WTC11 (cell line): ENCODE measurements at regions of chr22 and their contacts with region 1.

Region 1: DNA sequence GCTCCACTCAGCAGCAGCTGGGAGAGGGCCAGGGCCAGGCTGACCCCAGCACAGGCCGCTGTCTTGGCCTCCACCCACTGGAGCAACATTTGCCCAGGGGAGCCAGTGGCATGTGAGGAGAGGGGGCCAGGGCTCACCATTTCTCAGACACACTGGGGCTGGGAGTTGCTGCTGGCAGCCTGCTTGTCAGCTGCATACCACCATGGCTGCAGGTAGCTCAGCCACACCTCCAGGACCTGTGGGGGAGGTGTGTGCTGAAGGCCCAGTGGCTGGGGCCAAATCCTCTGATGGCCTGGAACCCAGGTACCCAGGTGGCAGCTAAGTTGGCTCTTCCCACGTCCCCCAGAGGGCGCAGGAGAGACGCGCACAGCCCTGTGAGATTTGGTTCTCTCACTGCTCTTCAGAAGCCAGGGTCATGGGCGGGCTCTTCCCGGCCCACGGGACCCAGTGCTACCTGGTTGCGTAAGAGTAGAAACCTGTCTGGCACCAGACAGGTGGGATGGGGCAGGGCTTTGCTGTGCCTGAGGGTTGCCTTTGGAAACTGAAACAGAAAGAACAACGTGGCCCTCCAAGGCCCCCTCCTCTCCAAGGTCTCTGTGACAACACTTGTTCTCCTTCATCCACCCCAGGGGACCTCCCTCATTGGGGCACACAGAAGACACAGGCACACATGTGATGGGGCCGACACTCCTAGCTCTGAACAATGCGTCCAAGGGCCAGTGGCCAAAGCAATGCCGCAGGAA is 98.8 kb downstream of the MED15 start:
- DNase-seq: peak; percentile 88
- ATAC-seq: peak; percentile 93
- H3K4me3 Mint-ChIP-seq: no peak overlapping the region
- H3K27ac Mint-ChIP-seq: no peak overlapping the region
- H3K4me1 Mint-ChIP-seq: peaks cover 12% of the 10 kb centered on the region
- H3K27me3 Mint-ChIP-seq: no peaks in the 10 kb centered on the region
- CTCF ChIP-seq: peak; percentile 56; the same call in 1 of the 2 replicates

Region 2: GRCh38 chr22:20027966-20028854 is 578.0 kb before region 1 on chr22:
- CTCF ChIA-PET with region 1: no interaction called
- POLR2A ChIA-PET with region 1: no interaction called
- DNase-seq: no peak
- ATAC-seq: no peak
- H3K4me3 Mint-ChIP-seq: no peak overlapping the region
- H3K27ac Mint-ChIP-seq: no peak overlapping the region
- H3K4me1 Mint-ChIP-seq: 0 out of 2 replicates have a peak, but pooled peaks cover 4% of the 10 kb centered on the region
- H3K27me3 Mint-ChIP-seq: no peaks in the 10 kb centered on the region; the same call in 1 of the 2 replicates
- CTCF ChIP-seq: no peak

Region 3: GRCh38 chr22:20495861-20496681 is 110.1 kb before region 1 on chr22:
- CTCF ChIA-PET with region 1: no interaction called
- POLR2A ChIA-PET with region 1: no interaction called
- DNase-seq: peak; percentile 87
- ATAC-seq: peak; percentile 69
- H3K4me3 Mint-ChIP-seq: peak overlapping the region; percentile 92
- H3K27ac Mint-ChIP-seq: peak overlapping the region; percentile 85
- H3K4me1 Mint-ChIP-seq: peaks cover 16% of the 10 kb centered on the region
- H3K27me3 Mint-ChIP-seq: peaks cover 25% of the 10 kb centered on the region
- CTCF ChIP-seq: peak; percentile 70

Region 4: DNA sequence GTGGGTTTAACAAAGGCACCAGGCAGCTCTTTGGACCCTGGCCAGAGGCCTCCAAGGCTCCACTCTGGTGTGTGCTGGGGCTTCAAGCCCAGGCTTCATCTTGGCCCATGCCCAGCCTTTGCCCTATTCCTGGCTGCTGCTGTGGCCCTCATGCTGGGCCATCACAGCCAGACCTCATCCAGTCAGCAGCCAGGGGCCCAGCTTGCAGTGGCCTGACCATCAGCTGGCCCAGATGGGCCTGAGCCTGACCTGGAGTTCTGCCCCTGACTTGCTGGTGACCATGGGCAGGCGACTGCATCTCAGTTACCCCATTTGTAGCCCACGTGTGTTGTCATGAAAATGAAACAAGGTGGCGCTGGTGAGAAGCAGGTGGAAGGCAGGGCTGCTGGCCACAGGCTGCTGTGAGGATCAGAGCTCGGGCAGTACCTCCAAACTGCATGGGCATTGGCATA is 22.7 kb before region 1 on chr22:
- CTCF ChIA-PET with region 1: interaction called, 17 read pairs
- POLR2A ChIA-PET with region 1: no interaction called
- DNase-seq: peak; percentile 45
- ATAC-seq: peak; percentile 56; the same call in 1 of the 2 replicates
- H3K4me3 Mint-ChIP-seq: no peak overlapping the region
- H3K27ac Mint-ChIP-seq: no peak overlapping the region
- H3K4me1 Mint-ChIP-seq: no peaks in the 10 kb centered on the region
- H3K27me3 Mint-ChIP-seq: no peaks in the 10 kb centered on the region
- CTCF ChIP-seq: no peak

Region 5: DNA sequence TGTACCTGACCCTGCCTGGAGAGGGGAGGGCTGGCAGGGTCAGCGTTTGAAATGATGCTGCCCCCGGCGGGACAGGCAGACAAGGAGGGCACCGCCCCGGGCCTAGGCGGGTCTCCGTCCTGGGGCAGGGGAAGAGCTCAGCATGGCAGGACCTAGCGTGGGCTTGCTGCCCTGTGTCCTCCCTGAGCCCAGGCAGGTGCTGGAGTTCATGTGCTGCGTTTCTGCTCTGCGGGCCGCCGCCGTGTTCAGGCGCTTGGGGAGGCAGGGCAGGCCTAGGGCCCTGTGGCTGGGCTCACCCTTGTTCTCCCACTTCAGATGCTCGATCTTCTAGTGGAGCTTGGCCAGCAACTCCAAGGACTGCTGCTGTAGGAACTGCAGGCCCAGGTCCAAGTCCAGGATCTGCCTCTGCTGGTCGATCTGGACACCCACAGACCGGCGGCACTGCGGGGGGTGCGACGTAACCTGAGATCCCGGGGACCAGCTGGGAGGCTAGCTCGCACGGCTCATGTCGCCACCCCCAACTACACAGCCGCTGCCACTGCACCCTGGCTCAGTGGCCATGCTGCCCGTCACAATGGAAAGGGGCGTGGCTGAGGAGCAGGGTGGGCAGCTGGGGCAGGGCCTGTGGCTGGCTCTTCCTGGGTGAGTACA is 14.4 kb before region 1 on chr22:
- CTCF ChIA-PET with region 1: interaction called, 18 read pairs
- POLR2A ChIA-PET with region 1: interaction called, 3 read pairs
- DNase-seq: peak; percentile 74
- ATAC-seq: peak; percentile 82
- H3K4me3 Mint-ChIP-seq: no peak overlapping the region
- H3K27ac Mint-ChIP-seq: no peak overlapping the region
- H3K4me1 Mint-ChIP-seq: peaks cover 5% of the 10 kb centered on the region; the same call in 1 of the 2 replicates
- H3K27me3 Mint-ChIP-seq: no peaks in the 10 kb centered on the region
- CTCF ChIP-seq: no peak

Region 6: GRCh38 chr22:20654343-20655208 is 48.4 kb after region 1 on chr22:
- CTCF ChIA-PET with region 1: no interaction called
- POLR2A ChIA-PET with region 1: no interaction called
- DNase-seq: no peak
- ATAC-seq: no peak
- H3K4me3 Mint-ChIP-seq: no peak overlapping the region
- H3K27ac Mint-ChIP-seq: no peak overlapping the region
- H3K4me1 Mint-ChIP-seq: no peaks in the 10 kb centered on the region
- H3K27me3 Mint-ChIP-seq: peaks cover 7% of the 10 kb centered on the region
- CTCF ChIP-seq: no peak